PC-3 (cell line): ENCODE measurements at regions of chr1 and their contacts with region 1.

Region 1: GRCh38 chr1:94514095-94514727 is 27.3 kb downstream of the F3 start:
- DNase-seq: peak; percentile 53
- ATAC-seq: peak; percentile 63; the same call in 1 of the 2 replicates
- H3K4me3 ChIP-seq: no peak overlapping the region
- H3K27ac ChIP-seq: no peak overlapping the region
- H3K4me1 ChIP-seq: no peaks in the 10 kb centered on the region
- H3K27me3 ChIP-seq: no peaks in the 10 kb centered on the region
- CTCF ChIP-seq: peak; percentile 85

Region 2: GRCh38 chr1:94125551-94126514 is 388.4 kb before region 1 on chr1:
- CTCF ChIA-PET with region 1: no interaction called
- POLR2A ChIA-PET with region 1: no interaction called
- intact Hi-C with region 1: no loop called
- DNase-seq: no peak
- ATAC-seq: no peak
- H3K4me3 ChIP-seq: no peak overlapping the region
- H3K27ac ChIP-seq: no peak overlapping the region
- H3K4me1 ChIP-seq: no peaks in the 10 kb centered on the region
- H3K27me3 ChIP-seq: no peaks in the 10 kb centered on the region
- CTCF ChIP-seq: no peak

Region 3: DNA sequence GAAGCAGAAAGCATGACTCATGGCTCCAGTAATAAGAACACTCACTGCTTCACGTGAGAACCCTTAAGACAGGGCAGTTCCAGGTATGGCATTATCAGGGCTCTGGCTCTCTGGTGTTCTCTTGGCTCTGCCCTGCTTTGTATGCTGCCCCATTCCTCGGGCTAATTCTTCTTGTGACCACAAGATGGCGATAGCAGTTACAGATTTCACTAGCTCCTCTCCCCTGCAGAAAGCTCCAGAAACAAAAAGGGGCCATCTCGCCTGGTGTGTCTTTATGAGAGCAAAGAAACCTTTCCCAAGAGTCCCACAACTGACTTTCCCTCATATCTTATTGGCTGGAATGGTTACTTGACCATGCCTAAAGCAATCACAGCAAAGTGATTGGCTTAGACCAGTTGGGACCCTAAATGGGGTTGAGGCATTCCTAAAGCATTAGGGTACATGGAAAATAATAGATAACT is 32.7 kb before region 1 on chr1:
- CTCF ChIA-PET with region 1: no interaction called
- POLR2A ChIA-PET with region 1: interaction called, 12 read pairs
- intact Hi-C with region 1: no loop called
- DNase-seq: peak; percentile 80
- ATAC-seq: peak; percentile 98
- H3K4me3 ChIP-seq: no peak overlapping the region
- H3K27ac ChIP-seq: no peak overlapping the region
- H3K4me1 ChIP-seq: no peaks in the 10 kb centered on the region
- H3K27me3 ChIP-seq: no peaks in the 10 kb centered on the region
- CTCF ChIP-seq: peak; percentile 80

Region 4: DNA sequence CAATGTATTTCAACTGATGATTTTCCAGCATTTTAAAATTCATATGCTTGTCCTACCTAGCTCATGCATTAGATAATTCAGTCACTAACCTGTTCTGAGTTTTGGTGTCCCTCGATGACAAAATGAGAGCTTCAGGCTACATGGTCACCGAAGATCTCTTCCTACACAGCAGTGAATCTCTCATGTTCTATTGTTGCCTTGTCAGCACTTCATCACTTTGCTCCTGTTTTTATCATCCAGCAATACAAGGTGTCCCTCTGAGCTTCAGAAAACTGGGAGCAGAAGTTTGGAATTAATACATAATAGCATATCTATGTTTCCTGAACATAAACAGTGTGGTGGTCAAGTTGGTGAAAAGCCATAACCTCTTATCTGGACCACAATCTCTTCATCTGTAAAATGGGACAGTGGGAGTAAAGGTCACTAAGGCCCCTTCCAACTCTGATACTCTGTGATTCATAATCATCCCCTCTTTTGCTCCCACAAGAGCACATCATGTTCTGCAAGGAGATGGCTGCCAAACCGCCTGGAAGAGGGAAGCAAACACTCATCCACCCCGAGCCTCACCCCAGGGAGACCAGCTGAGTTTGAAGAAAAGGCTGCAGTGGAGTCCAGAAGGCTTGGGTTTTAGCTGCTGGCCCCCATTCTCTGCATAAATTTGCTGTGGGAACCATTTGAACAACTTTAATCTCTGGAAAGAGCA is 165.3 kb after region 1 on chr1:
- CTCF ChIA-PET with region 1: no interaction called
- POLR2A ChIA-PET with region 1: no interaction called
- intact Hi-C with region 1: no loop called
- DNase-seq: no peak
- ATAC-seq: no peak
- H3K4me3 ChIP-seq: no peak overlapping the region
- H3K27ac ChIP-seq: no peak overlapping the region
- H3K4me1 ChIP-seq: no peaks in the 10 kb centered on the region
- H3K27me3 ChIP-seq: no peaks in the 10 kb centered on the region
- CTCF ChIP-seq: no peak